ENCODE measurements at regions of chr2 and their contacts with region 1.

Region 1: DNA sequence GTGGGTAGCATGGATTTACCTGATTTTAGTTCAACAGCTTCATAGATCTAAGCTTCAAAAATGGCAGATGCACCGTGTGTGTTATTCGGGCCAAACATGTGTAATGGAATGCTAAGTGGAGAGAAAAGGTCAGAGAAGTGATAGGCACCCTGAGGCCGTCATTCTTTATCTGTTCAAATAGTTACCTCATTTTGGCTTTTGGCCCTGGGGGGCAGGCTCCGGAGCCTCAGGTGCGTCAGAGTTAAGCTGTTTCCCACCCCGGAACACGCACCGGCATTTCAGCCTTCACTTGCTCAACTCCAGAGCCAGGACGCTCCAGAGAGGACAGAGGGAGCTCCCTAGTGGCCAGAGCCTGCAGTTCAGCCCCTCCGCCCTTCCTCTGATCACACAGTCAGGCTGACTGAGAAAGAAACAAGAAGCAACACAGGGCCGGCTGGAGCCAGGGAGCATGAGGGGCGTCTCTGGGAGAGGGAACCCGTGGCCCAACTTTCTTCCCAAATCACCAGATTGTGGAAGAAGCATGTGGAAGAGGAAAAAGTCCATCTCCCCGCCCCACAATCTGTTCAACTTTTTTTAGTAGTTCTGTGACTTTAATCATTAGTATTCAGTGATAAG is 135.2 kb upstream of the EPC2 start:
- DNase-seq: peak; percentile 70 to 88 (median 84)
- ATAC-seq: peak; percentile 100
- H3K4me3 ChIP-seq: peak overlapping the region; percentile 16 to 31
- H3K4me3 Mint-ChIP-seq: peak overlapping the region; percentile 55
- H3K27ac ChIP-seq: no peak overlapping the region
- H3K27ac Mint-ChIP-seq: peak overlapping the region; percentile 41
- H3K4me1 ChIP-seq: peaks cover 10% of the 10 kb centered on the region
- H3K4me1 Mint-ChIP-seq: peaks cover 9% of the 10 kb centered on the region
- H3K27me3 ChIP-seq: no peaks in the 10 kb centered on the region
- H3K27me3 Mint-ChIP-seq: no peaks in the 10 kb centered on the region
- CTCF ChIP-seq: peak; percentile 86

Region 2: DNA sequence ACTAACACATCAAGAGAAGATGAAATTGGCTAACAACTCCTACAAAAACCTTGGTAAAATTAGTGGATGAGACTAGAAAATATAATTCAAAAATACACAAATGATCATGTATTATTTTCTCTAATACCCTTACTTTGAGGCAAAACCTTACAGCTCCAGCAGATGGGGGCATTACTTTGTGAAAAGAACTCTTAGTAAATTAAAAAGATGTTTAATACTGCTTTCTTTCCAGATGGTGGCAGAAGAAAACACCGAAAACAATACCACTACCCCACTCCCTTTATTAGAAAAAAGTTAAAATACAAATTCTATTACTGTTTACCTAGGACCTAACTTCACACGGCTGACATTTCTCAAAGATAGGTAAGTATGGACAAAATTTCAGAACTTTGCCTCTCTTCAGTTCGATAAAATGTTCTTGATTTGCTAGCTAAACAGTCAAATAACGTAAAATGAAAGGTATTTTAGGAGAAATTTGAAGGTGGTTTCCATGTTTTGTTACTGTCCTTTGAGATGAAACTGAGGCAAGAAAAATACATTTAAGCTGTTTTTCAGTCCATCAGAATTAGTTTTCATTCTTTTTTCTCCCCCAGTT is 519.5 kb before region 1 on chr2:
- CTCF ChIA-PET with region 1: interaction called, 35 read pairs
- POLR2A ChIA-PET with region 1: no interaction called
- intact Hi-C with region 1: loop called (anchors 1 kb)
- DNase-seq: peak in 4 of 9 experiments; percentile 29 to 70 (median 45)
- ATAC-seq: peak; percentile 92
- H3K4me3 ChIP-seq: no peak overlapping the region
- H3K4me3 Mint-ChIP-seq: no peak overlapping the region
- H3K27ac ChIP-seq: no peak overlapping the region
- H3K27ac Mint-ChIP-seq: peak overlapping the region; percentile 11
- H3K4me1 ChIP-seq: no peaks in the 10 kb centered on the region
- H3K4me1 Mint-ChIP-seq: peaks cover 26% of the 10 kb centered on the region
- H3K27me3 ChIP-seq: no peaks in the 10 kb centered on the region
- H3K27me3 Mint-ChIP-seq: no peaks in the 10 kb centered on the region
- CTCF ChIP-seq: peak; percentile 99

Region 3: DNA sequence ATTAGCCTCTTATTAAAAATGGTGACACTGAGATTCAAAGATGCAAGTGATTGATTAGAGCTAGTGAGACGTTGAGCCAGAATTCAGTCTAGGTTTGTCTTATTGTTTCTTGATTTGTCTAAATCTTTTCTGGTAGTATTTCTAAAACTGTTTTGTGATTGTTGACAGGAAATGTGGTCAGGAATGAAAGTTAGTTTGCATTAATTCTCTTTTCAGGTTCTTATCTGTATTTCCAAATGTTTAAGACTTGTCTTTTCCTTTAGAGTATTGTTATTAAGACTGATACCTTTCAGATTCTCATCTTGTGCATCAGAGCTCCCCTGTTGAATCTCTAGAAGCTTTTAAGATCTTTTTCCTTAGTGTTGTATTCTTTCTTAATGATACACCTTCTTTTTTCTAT is 399.2 kb before region 1 on chr2:
- CTCF ChIA-PET with region 1: no interaction called
- POLR2A ChIA-PET with region 1: no interaction called
- intact Hi-C with region 1: loop called in 1 of 2 experiments (anchors 5 kb)
- DNase-seq: no peak
- ATAC-seq: no peak
- H3K4me3 ChIP-seq: no peak overlapping the region
- H3K4me3 Mint-ChIP-seq: no peak overlapping the region
- H3K27ac ChIP-seq: no peak overlapping the region
- H3K27ac Mint-ChIP-seq: peak overlapping the region; percentile 4
- H3K4me1 ChIP-seq: peaks cover 7% of the 10 kb centered on the region
- H3K4me1 Mint-ChIP-seq: peaks cover 15% of the 10 kb centered on the region
- H3K27me3 ChIP-seq: no peaks in the 10 kb centered on the region
- H3K27me3 Mint-ChIP-seq: no peaks in the 10 kb centered on the region
- CTCF ChIP-seq: no peak

Region 4: DNA sequence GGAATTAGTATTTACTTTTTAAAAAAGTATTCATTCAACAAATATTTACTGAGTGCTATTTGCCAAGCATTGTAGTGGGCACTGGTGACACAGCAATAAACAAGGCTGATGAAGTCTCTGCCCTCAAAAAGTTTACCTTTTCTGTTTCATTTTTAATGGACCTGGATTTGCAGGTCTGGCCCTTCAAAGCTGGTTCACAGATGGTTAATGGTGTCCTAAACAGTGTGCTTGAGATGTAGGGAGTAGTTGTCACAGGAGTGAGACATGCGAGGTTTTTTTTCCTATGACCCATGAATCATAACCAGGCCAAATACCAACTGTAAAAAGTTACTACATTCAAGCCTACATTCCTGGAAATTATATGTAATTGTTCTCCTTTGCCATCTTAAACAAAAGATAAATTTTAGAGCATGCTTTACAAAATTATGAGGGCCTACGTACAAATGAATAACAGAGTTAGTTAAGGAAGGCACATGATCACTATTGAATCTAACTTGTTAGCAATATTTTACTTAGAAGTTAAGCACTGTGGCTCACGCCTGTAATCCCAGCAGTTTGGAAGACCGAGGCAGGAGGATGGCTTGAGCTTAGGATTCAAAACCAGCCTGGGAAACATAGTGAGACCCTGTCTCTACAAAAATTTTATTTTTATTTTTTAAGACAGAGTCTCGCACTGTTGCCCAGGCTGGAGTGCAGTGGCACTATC is 264.7 kb before region 1 on chr2:
- CTCF ChIA-PET with region 1: no interaction called
- POLR2A ChIA-PET with region 1: no interaction called
- intact Hi-C with region 1: no loop called
- DNase-seq: no peak
- ATAC-seq: no peak
- H3K4me3 ChIP-seq: no peak overlapping the region
- H3K4me3 Mint-ChIP-seq: no peak overlapping the region
- H3K27ac ChIP-seq: no peak overlapping the region
- H3K27ac Mint-ChIP-seq: no peak overlapping the region
- H3K4me1 ChIP-seq: no peaks in the 10 kb centered on the region
- H3K4me1 Mint-ChIP-seq: no peaks in the 10 kb centered on the region
- H3K27me3 ChIP-seq: no peaks in the 10 kb centered on the region
- H3K27me3 Mint-ChIP-seq: no peaks in the 10 kb centered on the region
- CTCF ChIP-seq: no peak

Region 5: GRCh38 chr2:148540022-148540421 is 30.6 kb after region 1 on chr2:
- CTCF ChIA-PET with region 1: interaction called, 15 read pairs
- POLR2A ChIA-PET with region 1: no interaction called
- intact Hi-C with region 1: no loop called
- DNase-seq: peak in 1 of 9 experiments; percentile 40
- ATAC-seq: peak; percentile 71
- H3K4me3 ChIP-seq: peak overlapping the region in 1 of 2 experiments; percentile 3
- H3K4me3 Mint-ChIP-seq: peak overlapping the region; percentile 55
- H3K27ac ChIP-seq: no peak overlapping the region
- H3K27ac Mint-ChIP-seq: peak overlapping the region; percentile 79
- H3K4me1 ChIP-seq: peaks cover 32% of the 10 kb centered on the region
- H3K4me1 Mint-ChIP-seq: peaks cover 42% of the 10 kb centered on the region
- H3K27me3 ChIP-seq: no peaks in the 10 kb centered on the region
- H3K27me3 Mint-ChIP-seq: no peaks in the 10 kb centered on the region
- CTCF ChIP-seq: no peak

Region 6: GRCh38 chr2:148989882-148990493 is 480.6 kb after region 1 on chr2:
- CTCF ChIA-PET with region 1: interaction called, 9 read pairs
- POLR2A ChIA-PET with region 1: no interaction called
- intact Hi-C with region 1: loop called (anchors 1 kb)
- DNase-seq: peak in 8 of 9 experiments; percentile 4 to 75 (median 44)
- ATAC-seq: peak; percentile 95
- H3K4me3 ChIP-seq: no peak overlapping the region
- H3K4me3 Mint-ChIP-seq: no peak overlapping the region
- H3K27ac ChIP-seq: no peak overlapping the region
- H3K27ac Mint-ChIP-seq: no peak overlapping the region
- H3K4me1 ChIP-seq: no peaks in the 10 kb centered on the region
- H3K4me1 Mint-ChIP-seq: peaks cover 4% of the 10 kb centered on the region
- H3K27me3 ChIP-seq: no peaks in the 10 kb centered on the region
- H3K27me3 Mint-ChIP-seq: no peaks in the 10 kb centered on the region
- CTCF ChIP-seq: peak; percentile 78

Region 7: GRCh38 chr2:149180226-149180875 is 671.0 kb after region 1 on chr2:
- CTCF ChIA-PET with region 1: no interaction called
- POLR2A ChIA-PET with region 1: no interaction called
- intact Hi-C with region 1: no loop called
- DNase-seq: no peak
- ATAC-seq: no peak
- H3K4me3 ChIP-seq: no peak overlapping the region
- H3K4me3 Mint-ChIP-seq: no peak overlapping the region
- H3K27ac ChIP-seq: no peak overlapping the region
- H3K27ac Mint-ChIP-seq: no peak overlapping the region
- H3K4me1 ChIP-seq: no peaks in the 10 kb centered on the region
- H3K4me1 Mint-ChIP-seq: no peaks in the 10 kb centered on the region
- H3K27me3 ChIP-seq: no peaks in the 10 kb centered on the region
- H3K27me3 Mint-ChIP-seq: peaks cover 6% of the 10 kb centered on the region
- CTCF ChIP-seq: no peak

Measured in CD8-positive, alpha-beta T cell (primary cell).